ENCODE measurements at regions of chr11 and their contacts with region 1.

Region 1: GRCh38 chr11:73288873-73289707 is 17.0 kb downstream of the P2RY6 start:
- DNase-seq: peak; percentile 48 to 64
- ATAC-seq: peak; percentile 78 to 80
- H3K4me3 ChIP-seq: peak overlapping the region; percentile 23 to 52 (median 28)
- H3K27ac ChIP-seq: peak overlapping the region in 3 of 4 donors; percentile 31 to 61 (median 50)
- H3K4me1 ChIP-seq: peaks cover 3 to 5% of the 10 kb centered on the region in 2 donors
- H3K27me3 ChIP-seq: no peaks in the 10 kb centered on the region
- CTCF ChIP-seq: peak; percentile 90 to 96 (median 94)
- POLR2A ChIP-seq: no peak

Region 2: GRCh38 chr11:73229321-73229895 is 59.7 kb before region 1 on chr11:
- in situ Hi-C with region 1: no loop called
- intact Hi-C with region 1: no loop called
- DNase-seq: peak in 1 of 2 donors; percentile 13
- ATAC-seq: no peak
- H3K4me3 ChIP-seq: no peak overlapping the region
- H3K27ac ChIP-seq: peak overlapping the region; percentile 32 to 98 (median 56)
- H3K4me1 ChIP-seq: peaks cover 29 to 55% of the 10 kb centered on the region in 2 donors
- H3K27me3 ChIP-seq: no peaks in the 10 kb centered on the region
- CTCF ChIP-seq: no peak
- POLR2A ChIP-seq: no peak

Region 3: GRCh38 chr11:73242251-73243079 is 46.6 kb before region 1 on chr11:
- in situ Hi-C with region 1: no loop called
- intact Hi-C with region 1: loop called (anchors 2 kb)
- DNase-seq: peak; percentile 45 to 75
- ATAC-seq: peak; percentile 8 to 25
- H3K4me3 ChIP-seq: peak overlapping the region in 1 of 4 donors; percentile 12
- H3K27ac ChIP-seq: peak overlapping the region; percentile 92 to 98 (median 96)
- H3K4me1 ChIP-seq: peaks cover 44 to 52% of the 10 kb centered on the region in 2 donors
- H3K27me3 ChIP-seq: no peaks in the 10 kb centered on the region
- CTCF ChIP-seq: peak; percentile 90 to 93 (median 91)
- POLR2A ChIP-seq: no peak

Region 4: DNA sequence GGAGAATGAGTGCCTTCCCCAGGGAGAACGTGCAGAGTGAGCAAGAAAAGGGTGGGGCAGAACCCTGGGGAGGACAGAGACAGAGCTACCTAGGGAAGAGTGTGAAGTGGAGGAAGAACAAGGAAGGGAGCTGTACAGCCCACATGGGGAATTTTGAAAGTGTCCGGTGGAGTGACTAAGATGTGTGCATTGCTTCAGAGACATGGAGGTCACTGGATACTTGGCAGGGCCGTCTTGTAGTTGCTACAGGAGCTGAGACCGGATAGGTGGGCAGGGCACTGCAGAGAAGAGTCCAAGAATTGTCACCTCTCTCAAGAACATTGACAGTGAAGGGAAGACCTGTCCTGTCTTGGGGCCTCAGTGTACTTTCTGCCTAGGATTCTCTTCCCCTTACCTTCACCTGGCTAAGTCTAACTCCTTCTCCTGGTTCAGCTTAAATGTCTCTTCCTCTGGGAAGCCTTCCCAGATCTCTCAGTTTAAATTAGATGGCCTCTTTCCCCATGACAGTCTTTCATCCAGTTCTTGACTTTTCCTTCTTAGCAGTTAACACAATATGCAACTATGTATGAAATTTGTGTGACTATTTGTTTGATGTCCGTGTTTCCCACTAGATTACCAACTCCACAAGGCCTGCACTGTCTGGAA is 26.1 kb before region 1 on chr11:
- in situ Hi-C with region 1: no loop called
- intact Hi-C with region 1: loop called (anchors 2 kb)
- DNase-seq: peak; percentile 63 to 92
- ATAC-seq: peak; percentile 88 to 90
- H3K4me3 ChIP-seq: no peak overlapping the region
- H3K27ac ChIP-seq: peak overlapping the region in 2 of 4 donors; percentile 51 to 56
- H3K4me1 ChIP-seq: peaks cover 22 to 29% of the 10 kb centered on the region in 2 donors
- H3K27me3 ChIP-seq: peaks cover 0 to 2% (median 0%) of the 10 kb centered on the region in 3 donors
- CTCF ChIP-seq: no peak
- POLR2A ChIP-seq: no peak

Measured in gastrocnemius medialis (tissue), 4 donors.